ENCODE measurements at regions of chr1 and their contacts with region 1.

Region 1: DNA sequence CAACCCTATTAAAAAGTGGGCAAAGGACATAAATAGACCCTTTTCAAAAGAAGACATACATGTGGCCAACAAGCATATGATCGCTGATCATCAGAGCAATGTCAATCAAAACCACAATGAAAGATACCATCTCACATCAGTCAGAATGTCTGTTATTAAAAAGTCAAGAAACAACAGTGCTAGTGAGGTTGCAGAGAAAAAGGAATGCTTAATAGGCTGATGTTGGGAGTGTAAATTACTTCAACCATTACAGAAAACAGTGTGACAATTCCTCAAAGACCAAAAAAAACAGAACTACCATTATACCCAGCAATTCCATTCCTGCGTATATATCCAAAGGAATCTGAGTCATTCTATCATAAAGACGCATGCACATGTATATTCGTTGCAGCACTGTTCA is 13.2 kb downstream of the USH2A start:
- DNase-seq: no peak
- ATAC-seq: no peak
- H3K4me3 ChIP-seq: no peak overlapping the region
- H3K27ac ChIP-seq: no peak overlapping the region
- H3K4me1 ChIP-seq: no peaks in the 10 kb centered on the region
- H3K27me3 ChIP-seq: no peaks in the 10 kb centered on the region
- CTCF ChIP-seq: no peak

Region 2: DNA sequence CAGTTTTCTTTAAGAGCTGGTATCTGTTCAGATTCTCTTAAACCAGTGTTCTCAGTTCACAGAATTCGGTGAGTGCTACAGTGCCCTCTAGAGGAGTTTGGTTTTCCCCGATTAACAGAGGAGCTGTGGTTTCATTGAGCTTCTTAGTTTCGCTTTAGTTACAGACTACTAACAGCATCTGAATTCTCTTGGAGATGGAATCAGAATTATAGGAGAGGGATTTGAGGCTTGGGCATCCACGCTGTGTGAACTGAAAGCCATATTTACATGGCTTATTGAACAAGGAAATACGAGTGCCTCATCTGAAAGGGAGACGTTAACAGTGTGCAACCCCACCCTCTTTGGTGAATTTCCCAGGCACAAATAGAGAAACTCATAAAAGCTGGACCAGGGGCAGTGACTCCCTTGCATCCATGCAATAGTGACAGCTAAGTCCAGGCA is 188.7 kb before region 1 on chr1:
- CTCF ChIA-PET with region 1: no interaction called
- POLR2A ChIA-PET with region 1: no interaction called
- intact Hi-C with region 1: no loop called
- DNase-seq: peak; percentile 96
- ATAC-seq: peak; percentile 89
- H3K4me3 ChIP-seq: peak overlapping the region; percentile 68
- H3K27ac ChIP-seq: no peak overlapping the region
- H3K4me1 ChIP-seq: peaks cover 13% of the 10 kb centered on the region
- H3K27me3 ChIP-seq: peaks cover 12% of the 10 kb centered on the region; the same call in 1 of the 2 replicates
- CTCF ChIP-seq: peak; percentile 99

Region 3: GRCh38 chr1:216388558-216388957 is 21.5 kb before region 1 on chr1:
- CTCF ChIA-PET with region 1: no interaction called
- POLR2A ChIA-PET with region 1: no interaction called
- intact Hi-C with region 1: loop called (anchors 2 kb)
- DNase-seq: no peak
- ATAC-seq: no peak
- H3K4me3 ChIP-seq: no peak overlapping the region
- H3K27ac ChIP-seq: no peak overlapping the region
- H3K4me1 ChIP-seq: peaks cover 4% of the 10 kb centered on the region; the same call in 1 of the 2 replicates
- H3K27me3 ChIP-seq: peaks cover 16% of the 10 kb centered on the region; the same call in 1 of the 2 replicates
- CTCF ChIP-seq: no peak

Measured in PC-3 (cell line).